Activated CD4-positive, alpha-beta memory T cell treated with anti-CD3 and anti-CD28 coated beads for 36 hours (primary cell): ENCODE measurements at regions of chr17 and their contacts with region 1.

Region 1: GRCh38 chr17:59331129-59331928 is at the start of gene YPEL2:
- DNase-seq: peak; percentile 92
- H3K4me3 Mint-ChIP-seq: peak within 1 kb of the TSS; percentile 83
- H3K27ac Mint-ChIP-seq: peak within 1 kb of the TSS; percentile 64
- H3K4me1 Mint-ChIP-seq: peaks cover 60% of the 10 kb centered on the region
- H3K27me3 Mint-ChIP-seq: no peaks in the 10 kb centered on the region
- total RNA-seq, gene YPEL2: 7.6 to 9.4 TPM

Region 2: DNA sequence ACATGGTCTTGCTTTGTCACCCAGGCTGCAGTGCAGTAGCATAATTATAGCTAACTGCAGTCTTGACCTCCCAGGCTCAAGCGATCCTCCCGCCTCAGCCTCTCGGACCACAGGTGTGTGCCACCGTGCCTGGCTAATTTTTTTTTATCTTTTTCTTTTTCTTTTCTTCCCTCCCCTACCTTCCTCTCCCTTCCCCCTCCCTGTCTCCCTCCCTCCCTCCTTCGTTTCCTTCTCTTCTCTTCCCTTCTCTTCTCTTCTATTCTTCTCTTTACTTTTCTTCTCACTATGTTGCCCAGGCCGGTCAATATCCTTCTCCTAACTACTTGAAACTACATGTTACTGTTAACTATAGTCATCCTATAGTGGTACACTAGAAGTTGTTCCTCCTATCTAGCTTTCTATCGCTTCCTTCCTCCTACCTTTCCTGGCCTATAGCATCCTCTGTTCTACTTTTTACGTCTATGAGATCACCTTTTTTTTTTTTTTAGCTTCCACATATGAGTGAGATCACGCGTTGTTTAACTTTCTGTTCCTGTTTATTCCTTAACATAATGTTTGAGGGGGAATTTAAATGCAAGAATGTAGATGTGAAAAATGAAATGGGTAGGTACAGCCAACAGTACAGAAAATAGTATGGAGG is 30.5 kb before region 1 on chr17:
- CTCF ChIA-PET with region 1: no interaction called
- POLR2A ChIA-PET with region 1: no interaction called
- intact Hi-C with region 1: no loop called
- DNase-seq: no peak
- H3K4me3 Mint-ChIP-seq: no peak overlapping the region
- H3K27ac Mint-ChIP-seq: no peak overlapping the region
- H3K4me1 Mint-ChIP-seq: no peaks in the 10 kb centered on the region
- H3K27me3 Mint-ChIP-seq: peaks cover 1% of the 10 kb centered on the region

Region 3: DNA sequence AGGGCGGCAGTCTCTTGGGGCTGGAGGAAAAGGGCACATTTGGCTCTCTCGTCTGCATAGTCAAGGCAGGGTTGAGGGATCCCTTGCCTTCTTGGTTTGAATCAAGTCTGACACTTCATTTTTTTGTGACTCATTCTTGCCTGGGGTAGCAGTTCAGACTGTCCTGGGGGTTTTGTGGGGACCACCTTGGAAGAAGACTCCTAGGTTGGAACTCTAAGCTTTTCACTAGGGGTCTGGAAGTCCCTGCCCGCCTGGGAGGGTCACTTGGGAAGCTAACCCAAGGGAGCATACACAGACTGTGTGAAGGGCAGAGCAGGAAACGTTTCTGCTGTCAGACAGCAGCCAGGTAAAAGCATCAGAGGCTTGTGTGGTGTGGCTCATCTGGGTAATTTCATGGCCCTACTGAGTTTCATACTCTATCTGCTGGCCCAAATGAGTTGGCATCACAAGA is 11.4 kb after region 1 on chr17:
- CTCF ChIA-PET with region 1: interaction called, 14 read pairs
- POLR2A ChIA-PET with region 1: no interaction called
- intact Hi-C with region 1: no loop called
- DNase-seq: peak; percentile 66
- H3K4me3 Mint-ChIP-seq: no peak overlapping the region
- H3K27ac Mint-ChIP-seq: peak overlapping the region; percentile 80
- H3K4me1 Mint-ChIP-seq: peaks cover 54% of the 10 kb centered on the region
- H3K27me3 Mint-ChIP-seq: no peaks in the 10 kb centered on the region

Region 4: GRCh38 chr17:59361916-59362810 is 30.8 kb after region 1 on chr17:
- CTCF ChIA-PET with region 1: interaction called, 19 read pairs
- POLR2A ChIA-PET with region 1: interaction called, 5 read pairs
- intact Hi-C with region 1: loop called (anchors 1 kb)
- DNase-seq: peak; percentile 60
- H3K4me3 Mint-ChIP-seq: peak overlapping the region; percentile 21
- H3K27ac Mint-ChIP-seq: peak overlapping the region; percentile 83
- H3K4me1 Mint-ChIP-seq: peaks cover 78% of the 10 kb centered on the region
- H3K27me3 Mint-ChIP-seq: no peaks in the 10 kb centered on the region

Region 5: DNA sequence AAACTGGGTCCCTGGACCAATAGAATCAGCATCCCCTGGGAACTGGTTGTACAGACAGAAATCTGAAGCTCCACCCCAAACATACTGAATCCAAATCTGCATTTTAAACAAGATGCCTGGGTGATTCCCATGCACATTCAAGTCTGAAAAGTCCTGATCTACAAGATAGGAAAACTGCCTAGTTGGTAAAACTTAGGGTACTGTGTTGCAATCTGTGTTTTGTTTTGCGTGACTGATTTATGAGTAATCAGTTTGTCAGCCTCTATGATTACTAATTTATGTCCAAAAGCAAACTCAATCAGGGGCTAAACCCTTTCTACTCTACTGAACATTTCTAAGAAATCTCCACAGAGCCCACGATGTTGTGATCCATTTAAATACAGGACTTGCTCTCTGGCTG is 103.9 kb after region 1 on chr17:
- CTCF ChIA-PET with region 1: interaction called, 141 read pairs
- POLR2A ChIA-PET with region 1: interaction called, 5 read pairs
- intact Hi-C with region 1: loop called (anchors 1 kb)
- DNase-seq: no peak
- H3K4me3 Mint-ChIP-seq: no peak overlapping the region
- H3K27ac Mint-ChIP-seq: peak overlapping the region; percentile 89
- H3K4me1 Mint-ChIP-seq: peaks cover 61% of the 10 kb centered on the region
- H3K27me3 Mint-ChIP-seq: peaks cover 6% of the 10 kb centered on the region